WTC11 (cell line): ENCODE measurements at regions of chr3 and their contacts with region 1.

Region 1: DNA sequence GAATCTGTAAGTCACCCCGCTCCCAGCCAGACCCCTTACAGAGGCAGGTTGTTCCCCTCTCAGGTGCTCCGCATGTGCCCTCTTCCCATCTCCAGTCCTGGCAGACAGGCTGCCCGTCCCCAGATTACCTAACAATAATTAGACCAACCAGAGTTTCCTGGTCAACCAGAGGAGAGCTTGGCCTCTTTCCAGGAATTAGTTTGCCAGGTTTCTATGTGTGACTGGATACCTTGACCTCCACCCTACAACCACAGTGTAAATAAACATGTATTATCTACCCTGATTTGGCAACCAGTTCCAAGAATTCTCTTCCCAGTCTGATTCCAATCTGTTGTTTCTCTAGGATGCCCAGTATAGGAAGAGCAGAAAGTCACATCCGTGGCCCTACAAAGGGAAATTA is 178.0 kb upstream of the UMPS start:
- DNase-seq: no peak
- ATAC-seq: no peak
- H3K4me3 Mint-ChIP-seq: no peak overlapping the region
- H3K27ac Mint-ChIP-seq: no peak overlapping the region
- H3K4me1 Mint-ChIP-seq: peaks cover 2% of the 10 kb centered on the region
- H3K27me3 Mint-ChIP-seq: peaks cover 10% of the 10 kb centered on the region
- CTCF ChIP-seq: no peak

Region 2: DNA sequence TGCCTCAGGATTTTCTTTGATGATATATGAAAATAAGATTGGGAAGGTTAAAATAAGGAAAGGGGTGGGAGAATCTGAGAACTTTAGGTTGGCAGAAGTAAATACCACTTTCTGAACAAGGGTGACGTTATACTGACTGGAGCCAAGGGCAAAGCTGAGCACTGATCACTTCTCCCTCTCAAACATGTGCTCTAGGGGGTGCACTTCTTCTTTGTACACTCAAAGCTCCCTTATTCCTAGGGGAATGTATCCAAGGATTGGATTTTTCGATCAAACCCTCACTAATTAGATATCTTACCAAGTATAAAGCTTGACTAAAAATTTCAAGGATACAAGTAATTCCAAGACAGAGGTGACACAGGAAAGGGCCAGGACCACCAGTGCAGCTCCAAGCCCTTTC is 65.9 kb before region 1 on chr3:
- CTCF ChIA-PET with region 1: interaction called, 22 read pairs
- POLR2A ChIA-PET with region 1: no interaction called
- DNase-seq: no peak
- ATAC-seq: peak; percentile 77
- H3K4me3 Mint-ChIP-seq: no peak overlapping the region
- H3K27ac Mint-ChIP-seq: no peak overlapping the region
- H3K4me1 Mint-ChIP-seq: no peaks in the 10 kb centered on the region; the same call in 1 of the 2 replicates
- H3K27me3 Mint-ChIP-seq: no peaks in the 10 kb centered on the region
- CTCF ChIP-seq: no peak

Region 3: GRCh38 chr3:124576565-124577493 is 24.6 kb after region 1 on chr3:
- CTCF ChIA-PET with region 1: no interaction called
- POLR2A ChIA-PET with region 1: no interaction called
- DNase-seq: no peak
- ATAC-seq: no peak
- H3K4me3 Mint-ChIP-seq: no peak overlapping the region
- H3K27ac Mint-ChIP-seq: no peak overlapping the region
- H3K4me1 Mint-ChIP-seq: no peaks in the 10 kb centered on the region
- H3K27me3 Mint-ChIP-seq: peaks cover 3% of the 10 kb centered on the region; the same call in 1 of the 2 replicates
- CTCF ChIP-seq: no peak